Activated CD8-positive, alpha-beta T cell treated with anti-CD3 and anti-CD28 coated beads, Interleukin-2, amount 10 ng/mL, durations not matched to agents 7 days and 5 days (primary cell): ENCODE measurements at regions of chr14 and their contacts with region 1.

Region 1: GRCh38 chr14:21734457-21735074 is 60.9 kb upstream of the OR4E1 start:
- DNase-seq: peak; percentile 68
- ATAC-seq: peak; percentile 41
- H3K4me3 Mint-ChIP-seq: peak overlapping the region; percentile 64
- H3K27ac Mint-ChIP-seq: no peak overlapping the region
- H3K4me1 Mint-ChIP-seq: peaks cover 13% of the 10 kb centered on the region
- H3K27me3 Mint-ChIP-seq: peaks cover 25% of the 10 kb centered on the region

Region 2: DNA sequence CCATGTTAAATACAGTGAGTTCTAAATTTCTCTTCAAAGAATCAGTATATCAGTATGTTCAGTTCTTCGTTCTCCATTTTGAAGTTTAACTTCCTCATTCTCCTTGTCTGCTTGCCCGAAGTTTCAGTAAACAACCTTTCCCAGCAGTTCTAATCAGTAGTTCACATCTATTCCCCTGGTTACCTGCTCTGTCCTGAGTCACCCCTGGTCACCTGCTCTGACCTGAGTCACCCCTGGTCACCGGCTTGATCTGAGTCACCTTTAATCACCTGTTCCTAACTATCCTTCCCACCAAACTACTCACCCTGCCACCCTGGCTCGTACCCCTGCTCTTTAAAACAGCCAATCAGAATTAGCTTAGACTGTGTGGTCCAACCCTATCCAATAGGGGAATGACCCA is 145.2 kb before region 1 on chr14:
- CTCF ChIA-PET with region 1: no interaction called
- POLR2A ChIA-PET with region 1: no interaction called
- DNase-seq: no peak
- ATAC-seq: no peak
- H3K4me3 Mint-ChIP-seq: no peak overlapping the region
- H3K27ac Mint-ChIP-seq: no peak overlapping the region
- H3K4me1 Mint-ChIP-seq: no peaks in the 10 kb centered on the region
- H3K27me3 Mint-ChIP-seq: peaks cover 10% of the 10 kb centered on the region

Region 3: DNA sequence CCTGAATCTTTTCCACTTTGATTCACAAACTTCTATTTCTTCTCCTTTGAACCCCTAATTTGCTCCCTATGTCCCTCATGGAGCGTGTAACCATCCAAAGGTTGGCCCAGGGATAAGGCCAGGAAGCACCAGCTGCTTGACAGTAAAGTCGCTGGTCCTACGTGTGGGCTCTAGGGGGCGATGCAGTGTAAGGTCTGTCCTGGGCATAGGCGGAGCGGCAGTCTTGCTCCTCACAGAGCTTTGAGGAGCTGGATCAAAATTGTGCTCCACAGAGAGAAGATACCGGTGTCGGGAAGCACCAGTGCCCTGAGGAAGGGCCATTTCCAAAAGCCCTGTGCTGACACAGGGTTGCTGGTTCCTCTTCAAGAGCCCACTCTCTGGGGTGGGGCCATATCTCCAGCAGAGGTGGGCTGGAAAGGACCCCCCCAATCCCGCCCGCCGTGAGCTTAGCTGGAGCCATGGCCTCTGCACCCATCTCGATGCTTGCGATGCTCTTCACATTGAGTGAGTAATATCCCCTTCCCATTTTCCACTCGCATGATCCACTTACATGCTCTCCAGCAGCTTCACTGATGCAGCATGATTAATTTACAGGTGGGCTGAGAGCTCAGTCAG is 11.0 kb before region 1 on chr14:
- CTCF ChIA-PET with region 1: interaction called, 40 read pairs
- POLR2A ChIA-PET with region 1: no interaction called
- DNase-seq: peak; percentile 63
- ATAC-seq: peak; percentile 90
- H3K4me3 Mint-ChIP-seq: peak overlapping the region; percentile 72
- H3K27ac Mint-ChIP-seq: peak overlapping the region; percentile 75
- H3K4me1 Mint-ChIP-seq: no peaks in the 10 kb centered on the region
- H3K27me3 Mint-ChIP-seq: peaks cover 29% of the 10 kb centered on the region

Region 4: GRCh38 chr14:21768116-21768874 is 33.7 kb after region 1 on chr14:
- CTCF ChIA-PET with region 1: interaction called, 13 read pairs
- POLR2A ChIA-PET with region 1: no interaction called
- DNase-seq: peak; percentile 46
- ATAC-seq: peak; percentile 93
- H3K4me3 Mint-ChIP-seq: peak overlapping the region; percentile 39
- H3K27ac Mint-ChIP-seq: peak overlapping the region; percentile 62
- H3K4me1 Mint-ChIP-seq: no peaks in the 10 kb centered on the region
- H3K27me3 Mint-ChIP-seq: peaks cover 25% of the 10 kb centered on the region